PC-3 (cell line): ENCODE measurements at regions of chr4 and their contacts with region 1.

Region 1: GRCh38 chr4:54440394-54441136 is 211.5 kb downstream of the PDGFRA start:
- DNase-seq: peak; percentile 66
- ATAC-seq: no peak
- H3K4me3 ChIP-seq: peak overlapping the region; percentile 3; the same call in 1 of the 2 replicates
- H3K27ac ChIP-seq: no peak overlapping the region
- H3K4me1 ChIP-seq: no peaks in the 10 kb centered on the region
- H3K27me3 ChIP-seq: peaks cover 54% of the 10 kb centered on the region
- CTCF ChIP-seq: peak; percentile 85

Region 2: DNA sequence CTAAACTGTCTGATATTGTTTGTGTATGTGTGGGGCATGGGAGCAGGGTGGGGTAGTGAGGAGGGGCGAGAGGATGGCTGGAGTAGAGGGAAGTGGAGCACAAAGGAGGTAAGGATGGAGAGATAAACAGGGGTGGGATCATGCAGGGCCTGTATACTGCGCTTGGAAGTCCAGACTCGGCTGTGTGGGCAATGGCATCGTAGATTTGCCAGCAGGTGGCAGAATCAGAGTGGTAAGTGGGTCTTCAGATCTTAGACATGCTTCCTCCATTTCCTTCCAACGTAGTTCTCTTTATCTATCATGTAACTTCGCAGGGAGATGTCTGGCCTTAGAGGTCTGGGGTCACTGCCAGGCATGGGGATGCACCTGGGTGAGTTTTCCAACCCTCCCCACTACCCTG is 56.0 kb before region 1 on chr4:
- CTCF ChIA-PET with region 1: no interaction called
- POLR2A ChIA-PET with region 1: no interaction called
- intact Hi-C with region 1: loop called (anchors 2 kb)
- DNase-seq: peak; percentile 56
- ATAC-seq: peak; percentile 56; the same call in 1 of the 2 replicates
- H3K4me3 ChIP-seq: no peak overlapping the region
- H3K27ac ChIP-seq: no peak overlapping the region
- H3K4me1 ChIP-seq: no peaks in the 10 kb centered on the region
- H3K27me3 ChIP-seq: peaks cover 43% of the 10 kb centered on the region
- CTCF ChIP-seq: peak; percentile 68